ENCODE measurements at regions of chr11 and their contacts with region 1.

Region 1: DNA sequence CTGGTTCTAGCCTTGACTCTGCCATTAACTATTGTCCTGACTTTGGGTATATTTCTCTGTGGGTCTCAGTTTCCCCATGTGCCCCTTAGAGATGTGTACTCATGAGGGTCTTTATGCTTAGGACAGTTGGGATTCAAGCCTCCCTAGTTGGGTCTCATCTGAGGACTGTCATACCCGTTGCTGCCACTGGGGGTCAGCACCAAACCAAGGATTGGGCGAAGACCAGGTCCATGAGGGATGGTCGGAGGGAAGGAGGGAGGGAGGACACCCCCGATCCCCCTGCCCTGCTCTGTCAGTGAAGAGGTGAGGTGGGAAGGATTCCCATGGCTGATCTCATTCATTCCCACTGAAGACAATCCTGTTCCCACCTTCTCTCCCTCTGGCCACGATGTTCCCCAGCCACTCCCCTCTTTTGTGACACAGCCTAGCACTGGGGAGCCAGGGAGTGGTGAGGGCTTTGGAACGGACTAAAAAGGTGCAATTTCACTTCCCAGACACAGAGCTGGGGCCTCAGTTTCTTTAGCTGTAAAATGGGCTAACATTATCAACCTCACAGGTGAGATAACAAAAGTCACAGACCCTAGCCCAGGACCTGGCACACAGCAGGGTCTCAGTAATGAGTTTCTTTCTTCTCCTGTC is 12.4 kb upstream of the KLHL35 start:
- DNase-seq: no peak
- H3K4me3 ChIP-seq: no peak overlapping the region
- H3K27ac ChIP-seq: no peak overlapping the region
- H3K4me1 ChIP-seq: no peaks in the 10 kb centered on the region
- H3K27me3 ChIP-seq: no peaks in the 10 kb centered on the region
- CTCF ChIP-seq: peak; percentile 91 to 97 (median 96)
- POLR2A ChIP-seq: no peak

Region 2: GRCh38 chr11:75340050-75340409 is 105.4 kb before region 1 on chr11:
- intact Hi-C with region 1: no loop called
- DNase-seq: no peak
- H3K4me3 ChIP-seq: no peak overlapping the region
- H3K27ac ChIP-seq: peak overlapping the region; percentile 81
- H3K4me1 ChIP-seq: peaks cover 97% of the 10 kb centered on the region
- H3K27me3 ChIP-seq: no peaks in the 10 kb centered on the region
- CTCF ChIP-seq: no peak
- POLR2A ChIP-seq: no peak

Region 3: DNA sequence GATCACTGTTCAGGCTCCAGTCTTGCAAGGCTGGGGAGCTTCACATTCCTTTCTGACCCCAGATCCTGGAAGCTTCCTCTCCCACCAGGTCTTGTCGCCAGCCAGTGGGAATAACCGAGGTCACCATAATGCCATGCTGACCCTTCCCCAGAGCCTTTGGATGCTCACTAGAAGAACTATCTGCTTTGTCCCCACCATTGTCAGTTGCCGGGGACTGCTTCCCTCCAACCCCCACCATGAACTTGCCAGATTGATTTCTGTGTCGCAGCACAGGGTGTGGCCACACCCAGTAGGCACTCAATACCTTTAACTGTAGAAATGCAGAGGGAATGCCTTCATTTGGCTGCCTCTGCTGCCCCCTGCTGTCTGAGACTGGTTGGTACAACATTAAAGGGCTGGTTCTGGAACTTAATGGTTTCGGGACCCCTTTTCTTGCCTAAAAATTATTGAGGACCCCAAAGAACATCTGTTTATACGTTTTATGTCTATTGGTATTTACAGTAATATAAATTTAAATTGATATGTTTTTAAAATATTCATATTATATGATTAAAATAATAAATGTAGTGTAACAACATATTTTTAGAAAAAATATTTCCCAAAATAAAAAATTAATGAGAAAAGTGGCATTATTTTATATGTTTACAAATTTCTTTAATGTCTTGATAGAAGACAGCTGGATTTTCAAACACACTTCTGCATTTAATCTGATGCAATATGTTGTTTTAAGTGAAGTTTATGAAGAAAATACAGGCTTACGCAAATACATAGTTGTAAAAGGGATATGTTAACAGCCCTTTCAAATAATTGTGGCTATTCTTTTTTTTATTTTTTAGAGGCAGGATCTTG is 87.0 kb after region 1 on chr11:
- intact Hi-C with region 1: loop called (anchors 2 kb)
- DNase-seq: no peak
- H3K4me3 ChIP-seq: no peak overlapping the region
- H3K27ac ChIP-seq: no peak overlapping the region
- H3K4me1 ChIP-seq: peaks cover 11% of the 10 kb centered on the region
- H3K27me3 ChIP-seq: no peaks in the 10 kb centered on the region
- CTCF ChIP-seq: peak; percentile 88 to 97 (median 92)
- POLR2A ChIP-seq: no peak